Activated T-helper 1 cell treated with anti-CD3 and anti-CD28 coated beads, Interleukin-12 subunit alpha, Interleukin-12 subunit beta, Interleukin-2, Interleukin-4 antibody, amounts not matched to agents 30 ng/mL and 10 ng/mL and 1 ng/mL, durations not matched to agents 14 hours and 24 hours and 36 hours (primary cell): ENCODE measurements at regions of chr9 and their contacts with region 1.

Region 1: DNA sequence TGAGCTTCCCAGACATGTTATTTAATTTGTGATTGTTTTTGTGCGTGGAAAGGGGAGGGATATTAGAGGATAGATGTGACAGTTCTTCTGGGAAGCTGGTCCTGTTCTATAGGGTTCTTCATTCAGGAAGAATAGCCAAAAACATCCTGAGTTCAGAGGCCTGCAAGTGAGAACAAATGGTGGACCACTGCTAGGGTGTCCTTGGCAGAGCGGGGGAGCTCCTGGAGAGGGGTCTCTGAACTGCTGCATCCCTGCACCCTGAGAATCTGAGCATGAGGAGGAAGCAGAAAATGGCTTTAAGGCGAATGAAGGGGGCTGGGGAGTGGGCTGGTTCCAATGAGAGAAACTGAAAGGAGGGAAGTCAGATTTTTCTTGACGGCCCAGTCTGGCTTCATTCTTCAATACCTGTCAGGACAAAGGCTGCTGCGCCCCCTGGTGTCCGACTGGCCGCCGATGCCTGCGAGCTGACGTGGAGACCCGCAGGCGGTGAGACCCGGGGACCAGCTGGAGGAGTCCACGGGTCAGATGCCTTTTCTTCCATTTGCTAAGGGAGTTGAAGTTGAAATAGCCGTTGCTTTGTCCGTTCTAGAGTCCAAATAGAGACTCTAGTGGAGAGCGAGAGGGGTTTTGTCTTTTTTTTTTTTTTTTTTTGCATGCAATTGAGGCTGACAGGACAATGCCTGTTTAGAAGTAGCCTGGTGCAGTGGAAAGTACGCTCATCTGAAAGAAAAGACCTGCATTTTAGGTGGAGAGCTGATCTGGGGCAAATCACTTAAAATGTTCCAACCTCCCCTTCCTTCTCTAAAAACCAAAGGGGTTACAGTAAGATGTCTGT is 39.5 kb upstream of the NFIB start:
- DNase-seq: peak; percentile 57
- H3K4me3 Mint-ChIP-seq: no peak overlapping the region
- H3K27ac Mint-ChIP-seq: no peak overlapping the region
- H3K4me1 Mint-ChIP-seq: peaks cover 7% of the 10 kb centered on the region
- H3K27me3 Mint-ChIP-seq: peaks cover 31% of the 10 kb centered on the region

Region 2: DNA sequence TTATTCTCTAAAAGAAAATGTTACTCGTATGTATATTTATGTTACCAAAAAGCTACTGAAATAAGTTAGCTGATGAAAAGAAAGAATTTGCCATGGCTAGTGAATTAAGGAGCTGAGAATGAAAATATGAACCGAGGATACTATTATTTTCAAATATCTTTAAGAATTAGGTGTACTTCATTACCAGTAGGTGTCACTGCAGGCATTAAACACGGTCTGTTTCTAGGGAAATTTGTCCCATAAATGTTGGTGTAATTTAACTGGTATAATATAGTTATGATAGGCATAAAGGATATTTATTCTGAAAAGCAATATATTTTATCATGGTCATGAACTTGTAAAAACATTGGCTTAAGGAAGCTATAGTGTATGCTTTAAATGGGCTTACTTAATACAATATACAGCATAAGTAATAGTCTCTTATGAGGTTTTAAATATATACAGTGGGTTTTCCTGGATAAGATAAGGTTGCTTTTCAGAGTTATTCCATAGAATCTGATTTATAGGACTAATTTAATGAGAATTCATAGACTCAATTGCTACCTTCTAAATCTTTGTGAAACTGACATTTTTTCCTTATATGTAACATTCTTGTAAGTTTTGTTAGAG is 1001.6 kb before region 1 on chr9:
- intact Hi-C with region 1: loop called (anchors 5 kb)
- DNase-seq: no peak
- H3K4me3 Mint-ChIP-seq: no peak overlapping the region
- H3K27ac Mint-ChIP-seq: no peak overlapping the region
- H3K4me1 Mint-ChIP-seq: no peaks in the 10 kb centered on the region
- H3K27me3 Mint-ChIP-seq: no peaks in the 10 kb centered on the region

Region 3: DNA sequence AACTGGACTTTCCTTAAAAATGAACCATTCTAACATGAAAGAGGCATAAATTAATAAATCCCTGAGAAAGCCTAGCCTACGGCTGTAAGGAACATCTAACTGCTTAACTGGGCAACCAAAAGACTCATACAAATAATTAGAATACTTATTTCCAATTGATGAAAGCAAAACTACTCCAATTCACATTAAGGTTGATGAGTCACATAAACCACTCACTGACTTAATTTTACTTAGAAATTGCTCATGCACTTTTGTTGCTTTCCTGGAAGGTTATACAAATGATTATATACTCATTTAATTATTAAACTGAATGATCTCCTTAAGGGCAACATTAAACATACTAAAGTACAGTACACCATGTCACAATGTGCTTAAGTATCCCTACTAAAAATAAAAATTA is 141.4 kb before region 1 on chr9:
- intact Hi-C with region 1: loop called (anchors 5 kb)
- DNase-seq: no peak
- H3K4me3 Mint-ChIP-seq: no peak overlapping the region
- H3K27ac Mint-ChIP-seq: no peak overlapping the region
- H3K4me1 Mint-ChIP-seq: no peaks in the 10 kb centered on the region
- H3K27me3 Mint-ChIP-seq: no peaks in the 10 kb centered on the region

Region 4: DNA sequence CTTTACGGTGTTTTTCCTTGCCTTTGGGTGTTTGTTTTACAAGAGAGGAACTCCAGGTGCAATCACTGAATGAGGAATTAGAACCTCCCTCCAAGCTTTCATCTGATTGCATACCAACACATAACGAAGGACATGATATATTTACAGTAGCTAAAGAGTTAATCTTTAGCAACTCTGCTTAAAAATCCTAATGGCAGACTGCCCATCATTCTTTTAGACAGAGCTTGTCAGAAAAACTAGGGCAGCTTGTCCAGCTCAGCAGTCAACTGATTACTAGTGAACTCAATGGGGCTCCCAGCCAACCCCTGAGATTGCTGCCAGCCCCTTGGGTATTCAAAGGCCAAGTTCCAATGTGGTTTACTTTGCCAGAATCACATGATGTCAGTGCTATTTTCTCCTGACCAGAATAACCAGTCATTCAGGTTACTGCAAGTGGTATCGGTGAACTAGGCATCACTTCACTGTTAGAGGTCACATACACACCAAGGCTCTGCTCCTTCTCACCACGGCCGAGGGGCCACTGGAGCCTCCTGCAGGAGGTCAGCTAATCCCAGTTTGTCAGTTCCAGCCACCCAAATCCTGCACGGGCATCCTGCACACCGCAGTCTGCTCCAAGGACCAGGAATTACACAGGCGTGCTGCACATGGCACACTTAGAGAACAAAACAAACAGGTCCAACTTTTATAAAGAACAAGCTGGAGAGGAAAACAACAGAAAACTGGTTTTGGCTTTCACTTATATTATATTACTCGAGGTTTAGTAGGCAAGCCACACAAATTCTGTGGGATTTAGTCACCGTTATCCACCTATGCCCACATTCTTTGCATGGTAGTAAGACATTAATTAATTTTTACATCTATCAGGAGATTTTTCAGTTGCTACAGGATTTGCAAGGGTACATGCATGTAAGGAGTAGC is 102.0 kb before region 1 on chr9:
- intact Hi-C with region 1: no loop called
- DNase-seq: no peak
- H3K4me3 Mint-ChIP-seq: no peak overlapping the region
- H3K27ac Mint-ChIP-seq: no peak overlapping the region
- H3K4me1 Mint-ChIP-seq: no peaks in the 10 kb centered on the region
- H3K27me3 Mint-ChIP-seq: no peaks in the 10 kb centered on the region

Region 5: GRCh38 chr9:14372437-14373335 is 19.2 kb after region 1 on chr9:
- intact Hi-C with region 1: no loop called
- DNase-seq: no peak
- H3K4me3 Mint-ChIP-seq: no peak overlapping the region
- H3K27ac Mint-ChIP-seq: no peak overlapping the region
- H3K4me1 Mint-ChIP-seq: no peaks in the 10 kb centered on the region
- H3K27me3 Mint-ChIP-seq: peaks cover 2% of the 10 kb centered on the region

Region 6: GRCh38 chr9:14485366-14485765 is 131.9 kb after region 1 on chr9:
- intact Hi-C with region 1: no loop called
- DNase-seq: no peak
- H3K4me3 Mint-ChIP-seq: no peak overlapping the region
- H3K27ac Mint-ChIP-seq: no peak overlapping the region
- H3K4me1 Mint-ChIP-seq: no peaks in the 10 kb centered on the region
- H3K27me3 Mint-ChIP-seq: no peaks in the 10 kb centered on the region